ENCODE measurements at regions of chr17 and their contacts with region 1.

Region 1: GRCh38 chr17:75114552-75115314 is 5.0 kb downstream of the ARMC7 start:
- H3K4me3 Mint-ChIP-seq: peak overlapping the region; percentile 76
- H3K27ac Mint-ChIP-seq: peak overlapping the region; percentile 90
- H3K4me1 Mint-ChIP-seq: peaks cover 78% of the 10 kb centered on the region
- H3K27me3 Mint-ChIP-seq: no peaks in the 10 kb centered on the region

Region 2: DNA sequence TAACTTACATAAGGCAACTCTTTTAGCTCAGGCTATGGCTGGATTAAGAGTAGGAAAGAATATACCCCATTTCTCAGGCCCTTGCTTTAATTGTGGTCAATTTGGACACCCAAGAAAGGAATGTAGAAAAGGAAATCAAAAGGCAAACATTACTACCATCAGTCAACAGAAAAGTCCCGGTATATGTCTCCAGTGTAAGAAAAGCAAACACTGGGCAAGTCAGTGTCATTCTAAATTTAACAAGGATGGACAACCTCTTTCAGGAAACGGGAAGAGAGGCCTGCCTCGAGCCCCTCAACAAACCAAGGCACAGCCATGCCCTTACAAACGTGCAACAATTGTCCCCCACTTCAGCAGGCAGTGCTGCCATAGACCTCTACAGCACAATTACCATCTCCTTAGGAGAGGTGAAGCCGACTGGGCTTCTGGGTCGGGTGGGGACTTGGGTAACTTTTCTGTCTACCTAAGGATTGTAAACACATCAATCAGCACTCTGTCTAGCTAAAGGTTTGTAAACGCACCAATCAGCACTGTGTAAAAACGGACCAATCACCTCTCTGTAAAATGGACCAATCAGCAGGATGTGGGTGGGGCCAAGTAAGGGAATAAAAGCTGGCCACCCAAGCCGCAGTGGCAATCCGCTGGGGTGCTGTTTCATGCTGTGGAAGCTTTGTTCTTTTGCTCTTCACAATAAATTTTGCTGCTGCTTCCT is 89.9 kb before region 1 on chr17:
- intact Hi-C with region 1: no loop called
- H3K4me3 Mint-ChIP-seq: no peak overlapping the region
- H3K27ac Mint-ChIP-seq: peak overlapping the region; percentile 50
- H3K4me1 Mint-ChIP-seq: peaks cover 17% of the 10 kb centered on the region
- H3K27me3 Mint-ChIP-seq: peaks cover 1% of the 10 kb centered on the region

Region 3: GRCh38 chr17:75087558-75088453 is 26.9 kb before region 1 on chr17 and contains the start of gene SLC16A5:
- intact Hi-C with region 1: no loop called
- H3K4me3 Mint-ChIP-seq: peak within 1 kb of the TSS; percentile 95
- H3K27ac Mint-ChIP-seq: peak within 1 kb of the TSS; percentile 93
- H3K4me1 Mint-ChIP-seq: peaks cover 70% of the 10 kb centered on the region
- H3K27me3 Mint-ChIP-seq: no peaks in the 10 kb centered on the region

Region 4: GRCh38 chr17:75154195-75155106 is 39.7 kb after region 1 on chr17 and contains the start of gene JPT1:
- intact Hi-C with region 1: loop called (anchors 5 kb)
- H3K4me3 Mint-ChIP-seq: peak within 1 kb of the TSS; percentile 88
- H3K27ac Mint-ChIP-seq: peak within 1 kb of the TSS; percentile 90
- H3K4me1 Mint-ChIP-seq: peaks cover 34% of the 10 kb centered on the region
- H3K27me3 Mint-ChIP-seq: no peaks in the 10 kb centered on the region

Measured in dendritic cell treated with granulocyte-macrophage colony-stimulating factor and Interleukin-4, amounts not matched to agents 40 ng/mL and 50 ng/mL, for 4 days (primary cell).